ENCODE measurements at regions of chr15 and their contacts with region 1.

Region 1: DNA sequence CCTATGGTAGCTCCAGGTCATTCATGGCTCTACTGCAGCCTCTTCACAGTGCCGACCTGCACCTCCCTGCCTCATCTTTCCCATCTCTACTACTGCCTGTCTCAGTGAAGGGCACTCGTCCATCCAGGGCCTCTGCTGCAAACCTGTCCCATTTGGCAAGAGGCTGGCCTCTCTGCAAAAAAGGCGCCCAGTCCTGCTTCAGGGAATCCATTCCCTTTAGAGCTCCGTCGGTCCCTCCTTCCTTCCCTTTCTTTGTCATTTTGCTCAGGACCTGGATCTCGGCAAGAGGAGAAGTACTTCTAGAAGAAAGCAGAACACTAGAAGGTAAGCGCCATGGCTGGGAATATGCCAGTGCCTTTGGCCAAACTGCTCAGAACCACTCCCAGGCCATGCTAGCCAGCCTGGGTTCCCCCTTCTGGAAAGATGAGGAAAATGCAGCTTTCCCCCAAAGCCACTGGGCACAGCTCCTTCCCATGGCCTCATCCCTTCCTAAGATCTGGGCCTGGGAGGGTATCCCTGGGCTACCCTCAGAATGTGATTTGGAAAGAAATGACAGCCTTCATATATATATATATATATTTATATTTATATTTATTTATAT is 6.4 kb upstream of the ISL2 start:
- DNase-seq: peak; percentile 60
- ATAC-seq: peak; percentile 83 to 86

Region 2: GRCh38 chr15:76196269-76197231 is 133.6 kb before region 1 on chr15:
- intact Hi-C with region 1: loop called in 1 of 2 experiments (anchors 5 kb)
- DNase-seq: peak; percentile 55
- ATAC-seq: peak; percentile 67 to 89